ENCODE measurements at regions of chr2 and their contacts with region 1.

Region 1: GRCh38 chr2:28821295-28821958 is 10.8 kb downstream of the SPDYA start:
- DNase-seq: no peak
- H3K4me3 ChIP-seq: no peak overlapping the region
- H3K27ac ChIP-seq: no peak overlapping the region
- H3K4me1 ChIP-seq: peaks cover 0 to 6% (median 2%) of the 10 kb centered on the region in 4 donors
- H3K27me3 ChIP-seq: no peaks in the 10 kb centered on the region
- CTCF ChIP-seq: peak; percentile 63 to 73 (median 67)
- EP300 ChIP-seq: no peak
- POLR2A ChIP-seq: no peak

Region 2: GRCh38 chr2:28894470-28895177 is 73.2 kb after region 1 on chr2 and contains the start of gene WDR43:
- intact Hi-C with region 1: loop called (anchors 2 kb)
- DNase-seq: peak; percentile 98
- H3K4me3 ChIP-seq: peak within 1 kb of the TSS; percentile 91 to 98 (median 96)
- H3K27ac ChIP-seq: peak within 1 kb of the TSS; percentile 75 to 89 (median 82)
- H3K4me1 ChIP-seq: peaks cover 19 to 39% (median 38%) of the 10 kb centered on the region in 4 donors
- H3K27me3 ChIP-seq: no peaks in the 10 kb centered on the region
- CTCF ChIP-seq: peak in 1 of 3 experiments; percentile 10
- EP300 ChIP-seq: no peak
- POLR2A ChIP-seq: peak; percentile 52
- total RNA-seq, gene WDR43: 21.5 to 53.0 (median 31.0) TPM

Measured in esophagus muscularis mucosa (tissue), 4 donors.